Activated CD4-positive, alpha-beta memory T cell treated with anti-CD3 and anti-CD28 coated beads for 36 hours (primary cell): ENCODE measurements at regions of chr19 and their contacts with region 1.

Region 1: GRCh38 chr19:29610563-29611271 is 4.6 kb downstream of the POP4 start:
- DNase-seq: peak; percentile 89
- H3K4me3 Mint-ChIP-seq: no peak overlapping the region
- H3K27ac Mint-ChIP-seq: peak overlapping the region; percentile 64
- H3K4me1 Mint-ChIP-seq: peaks cover 17% of the 10 kb centered on the region
- H3K27me3 Mint-ChIP-seq: no peaks in the 10 kb centered on the region

Region 2: DNA sequence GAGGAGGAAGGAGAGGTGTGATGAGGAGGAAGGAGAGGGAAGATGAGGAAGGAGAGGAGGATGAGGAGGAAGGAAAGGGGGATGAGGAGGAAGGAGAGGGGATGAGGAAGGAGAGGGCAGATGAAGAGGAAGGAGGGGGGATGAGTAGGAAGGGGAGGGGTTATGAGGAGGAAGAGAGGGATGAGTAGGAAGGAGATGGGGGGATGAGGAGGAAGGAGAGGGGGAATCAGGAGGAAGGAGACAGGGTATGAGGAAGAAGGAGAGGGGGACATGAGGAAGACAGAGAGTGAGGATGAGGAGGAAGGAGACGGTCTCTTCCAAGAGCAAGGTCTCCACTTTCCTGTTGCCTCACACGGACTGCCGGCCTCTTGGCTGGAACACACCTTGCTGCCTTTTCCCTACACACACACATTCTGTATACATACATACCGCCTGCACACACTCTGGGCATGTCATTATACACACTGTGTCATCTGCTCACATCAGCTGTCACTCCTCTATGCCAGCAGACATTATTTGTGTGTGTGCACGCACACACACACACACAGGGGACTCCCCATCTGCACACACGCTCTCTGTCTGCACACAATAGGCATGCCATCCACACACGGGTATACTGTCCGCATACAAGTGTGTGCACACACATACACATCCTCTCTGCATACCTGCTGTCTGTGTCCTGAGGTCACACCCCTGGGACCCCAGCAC is 96.0 kb before region 1 on chr19:
- CTCF ChIA-PET with region 1: no interaction called
- POLR2A ChIA-PET with region 1: no interaction called
- intact Hi-C with region 1: no loop called
- DNase-seq: no peak
- H3K4me3 Mint-ChIP-seq: no peak overlapping the region
- H3K27ac Mint-ChIP-seq: no peak overlapping the region
- H3K4me1 Mint-ChIP-seq: no peaks in the 10 kb centered on the region
- H3K27me3 Mint-ChIP-seq: peaks cover 17% of the 10 kb centered on the region

Region 3: DNA sequence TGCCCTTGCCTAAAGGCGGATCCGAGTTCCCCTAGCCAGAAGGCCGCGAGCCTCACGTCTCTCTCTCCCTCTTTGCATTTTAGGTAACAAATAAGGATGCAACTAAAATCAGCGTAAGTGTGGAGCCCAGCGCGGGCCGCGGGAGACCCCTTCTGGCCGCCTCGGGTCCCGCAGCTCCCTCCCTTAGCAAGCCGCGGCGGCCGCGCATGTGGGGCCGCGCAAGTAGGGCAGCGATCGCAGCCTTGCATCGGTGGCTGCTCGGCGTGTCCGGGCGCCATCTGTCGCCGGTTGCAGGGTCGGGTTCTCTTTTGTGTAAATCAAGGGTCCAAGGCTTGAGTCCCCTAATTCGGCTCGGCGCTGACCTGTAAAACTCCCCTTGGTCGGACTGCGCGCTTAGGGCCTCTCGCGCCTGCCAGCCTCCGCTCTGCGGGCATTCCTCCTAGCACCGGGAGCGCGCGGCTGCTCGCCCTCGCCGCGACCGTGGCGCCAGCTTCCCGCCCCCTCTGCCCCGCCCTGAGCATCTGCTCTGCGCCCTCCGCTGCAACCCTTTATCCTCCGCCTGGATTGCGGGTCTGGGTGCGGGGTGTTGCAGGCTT is 82.3 kb before region 1 on chr19:
- CTCF ChIA-PET with region 1: interaction called, 11 read pairs
- POLR2A ChIA-PET with region 1: interaction called, 3 read pairs
- intact Hi-C with region 1: no loop called
- DNase-seq: peak; percentile 82
- H3K4me3 Mint-ChIP-seq: peak overlapping the region; percentile 29
- H3K27ac Mint-ChIP-seq: no peak overlapping the region
- H3K4me1 Mint-ChIP-seq: peaks cover 34% of the 10 kb centered on the region
- H3K27me3 Mint-ChIP-seq: peaks cover 68% of the 10 kb centered on the region

Region 4: GRCh38 chr19:29596885-29597525 is 13.7 kb before region 1 on chr19:
- CTCF ChIA-PET with region 1: interaction called, 13 read pairs
- POLR2A ChIA-PET with region 1: interaction called, 3 read pairs
- intact Hi-C with region 1: no loop called
- DNase-seq: no peak
- H3K4me3 Mint-ChIP-seq: no peak overlapping the region
- H3K27ac Mint-ChIP-seq: no peak overlapping the region
- H3K4me1 Mint-ChIP-seq: no peaks in the 10 kb centered on the region
- H3K27me3 Mint-ChIP-seq: peaks cover 23% of the 10 kb centered on the region

Region 5: GRCh38 chr19:29671393-29672160 is 60.9 kb after region 1 on chr19:
- CTCF ChIA-PET with region 1: interaction called, 66 read pairs
- POLR2A ChIA-PET with region 1: interaction called, 46 read pairs
- intact Hi-C with region 1: loop called (anchors 1 kb)
- DNase-seq: peak; percentile 95
- H3K4me3 Mint-ChIP-seq: peak overlapping the region; percentile 66
- H3K27ac Mint-ChIP-seq: peak overlapping the region; percentile 99
- H3K4me1 Mint-ChIP-seq: peaks cover 89% of the 10 kb centered on the region
- H3K27me3 Mint-ChIP-seq: no peaks in the 10 kb centered on the region

Region 6: DNA sequence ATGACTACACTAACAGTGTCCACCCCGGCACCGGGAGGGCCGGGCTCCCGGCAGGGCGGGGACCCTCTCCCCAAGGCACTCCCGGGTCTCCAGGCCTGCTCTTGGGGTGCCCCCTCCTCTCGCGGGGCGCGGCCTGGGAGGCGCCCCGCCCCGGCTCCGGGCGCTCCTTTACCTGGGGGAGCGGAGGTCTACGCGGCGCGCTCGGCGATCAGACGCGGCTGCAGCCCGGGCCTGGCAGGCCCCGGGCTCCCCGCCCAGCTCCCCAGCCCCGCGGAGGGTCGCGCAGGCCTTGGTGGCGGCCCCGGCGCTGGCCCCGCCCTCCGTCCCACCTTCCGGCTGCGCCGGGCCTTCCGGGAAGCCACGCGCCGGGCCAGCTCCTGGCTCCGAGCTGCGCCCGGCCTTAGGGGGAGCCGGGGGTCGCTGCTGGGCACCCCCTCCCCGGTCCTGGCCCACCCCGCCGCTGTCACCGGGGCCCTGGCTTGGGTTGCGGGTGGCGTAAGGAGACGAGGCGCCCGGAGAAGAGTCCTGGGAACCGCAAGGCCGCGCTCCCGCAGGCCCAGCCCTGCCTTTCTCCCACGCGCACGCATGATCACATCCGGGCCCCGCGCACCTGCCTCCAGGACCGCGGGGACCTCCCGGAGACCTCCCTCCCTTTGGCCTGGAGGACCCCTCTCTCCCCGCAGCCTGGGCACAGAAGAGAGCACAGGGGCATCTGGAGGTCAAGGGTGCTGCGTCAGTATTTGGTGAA is 104.4 kb after region 1 on chr19 and contains the start of gene C19orf12:
- CTCF ChIA-PET with region 1: interaction called, 192 read pairs
- POLR2A ChIA-PET with region 1: interaction called, 19 read pairs
- intact Hi-C with region 1: loop called (anchors 1 kb)
- DNase-seq: peak; percentile 74
- H3K4me3 Mint-ChIP-seq: peak within 1 kb of the TSS; percentile 87
- H3K27ac Mint-ChIP-seq: peak within 1 kb of the TSS; percentile 98
- H3K4me1 Mint-ChIP-seq: peaks cover 48% of the 10 kb centered on the region
- H3K27me3 Mint-ChIP-seq: no peaks in the 10 kb centered on the region
- total RNA-seq, gene C19orf12: 32.6 to 32.8 TPM

Region 7: DNA sequence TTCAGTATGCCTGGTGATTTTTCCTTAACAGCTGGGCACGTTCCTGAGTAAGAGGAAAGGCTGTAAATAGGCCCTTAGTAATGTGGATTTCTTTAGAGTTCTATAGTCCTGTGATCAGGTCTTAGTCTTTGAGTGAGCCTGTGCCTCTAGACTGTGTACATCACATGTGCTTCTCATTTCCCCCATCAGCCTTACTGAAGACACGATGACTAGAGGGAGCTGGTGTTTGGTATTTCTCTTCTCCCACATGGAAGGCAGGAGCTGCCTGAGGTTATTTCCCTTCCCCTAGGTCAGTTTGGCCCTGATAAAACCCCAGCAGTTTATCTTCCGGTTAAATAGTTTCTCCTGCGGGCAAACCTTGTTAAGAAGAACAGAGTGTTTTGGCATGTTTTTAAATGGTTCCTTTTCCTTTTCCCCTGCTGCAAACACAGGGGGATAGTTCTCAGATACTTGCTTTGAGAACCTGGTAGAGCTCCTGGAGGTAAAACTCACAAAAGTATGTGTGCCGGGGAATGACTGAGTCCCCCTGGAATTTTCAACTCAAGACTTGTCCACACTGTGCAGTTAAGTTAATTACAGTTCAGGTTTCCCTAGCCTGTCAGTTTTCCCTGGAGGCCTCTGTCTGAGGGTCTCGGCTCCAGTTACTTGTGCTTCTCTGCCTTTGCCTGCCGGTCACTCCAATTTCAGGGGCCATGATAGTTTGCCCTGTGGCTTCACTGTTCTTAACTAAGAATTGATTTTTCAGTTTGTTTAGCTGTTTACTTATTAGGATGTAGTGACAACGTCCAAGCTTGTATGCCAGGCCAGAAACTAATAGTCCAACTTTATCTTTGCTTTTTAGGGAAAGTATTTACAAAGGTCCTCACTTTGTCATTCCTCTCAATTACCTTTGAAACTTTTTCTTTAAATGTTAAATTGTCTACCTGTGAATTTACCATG is 425.7 kb after region 1 on chr19:
- CTCF ChIA-PET with region 1: no interaction called
- POLR2A ChIA-PET with region 1: no interaction called
- intact Hi-C with region 1: no loop called
- DNase-seq: no peak
- H3K4me3 Mint-ChIP-seq: no peak overlapping the region
- H3K27ac Mint-ChIP-seq: no peak overlapping the region
- H3K4me1 Mint-ChIP-seq: no peaks in the 10 kb centered on the region
- H3K27me3 Mint-ChIP-seq: no peaks in the 10 kb centered on the region